ENCODE measurements at regions of chr13 and their contacts with region 1.

Region 1: DNA sequence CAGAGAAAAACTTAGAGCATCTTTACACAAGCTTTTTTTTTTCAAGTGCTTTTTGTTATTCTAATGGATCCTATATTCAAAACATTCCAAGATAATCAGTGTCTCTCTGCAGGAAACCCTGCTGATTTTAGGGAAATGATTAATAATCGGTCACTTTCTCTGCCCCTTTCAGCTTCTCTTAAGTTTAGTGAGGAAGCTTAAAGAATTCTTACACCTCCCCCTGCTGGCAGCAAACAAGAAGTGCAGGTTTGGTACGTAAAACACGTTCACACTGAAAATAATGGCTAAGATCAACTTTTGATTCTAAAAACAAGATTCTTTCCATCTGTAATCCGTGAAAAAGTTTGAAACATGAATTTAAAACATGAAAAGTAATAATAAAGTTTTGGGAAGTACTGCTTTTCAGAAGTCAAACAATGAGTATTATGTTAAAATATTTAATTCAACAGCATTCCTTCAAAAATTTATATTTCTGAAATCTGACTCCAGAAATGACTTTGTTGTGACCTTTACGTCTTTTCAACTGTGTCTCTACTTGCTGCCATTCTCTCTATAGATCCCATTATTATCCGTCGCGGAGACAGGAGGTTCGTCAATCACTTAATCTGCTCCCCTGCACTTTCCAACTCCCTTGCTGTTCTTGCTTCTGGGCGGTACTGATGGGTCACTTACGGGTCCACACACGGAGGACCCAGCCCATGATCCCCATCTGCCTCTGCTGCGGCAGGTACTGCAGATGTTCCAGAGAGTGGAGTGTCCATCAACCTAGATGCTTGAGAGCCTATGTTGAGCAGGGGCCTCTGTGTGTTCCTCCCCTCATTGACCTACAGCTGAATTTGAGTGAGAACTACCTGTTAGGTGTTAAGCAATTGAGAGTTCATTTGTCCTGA is 203.1 kb upstream of the EDNRB start:
- DNase-seq: peak; percentile 6 to 18
- ATAC-seq: peak in 1 of 2 donors; percentile 39
- H3K4me3 ChIP-seq: peak overlapping the region in 1 of 4 donors; percentile 3
- H3K27ac ChIP-seq: no peak overlapping the region
- H3K4me1 ChIP-seq: no peaks in the 10 kb centered on the region
- H3K27me3 ChIP-seq: no peaks in the 10 kb centered on the region
- CTCF ChIP-seq: peak; percentile 49 to 73 (median 59)
- POLR2A ChIP-seq: no peak

Region 2: DNA sequence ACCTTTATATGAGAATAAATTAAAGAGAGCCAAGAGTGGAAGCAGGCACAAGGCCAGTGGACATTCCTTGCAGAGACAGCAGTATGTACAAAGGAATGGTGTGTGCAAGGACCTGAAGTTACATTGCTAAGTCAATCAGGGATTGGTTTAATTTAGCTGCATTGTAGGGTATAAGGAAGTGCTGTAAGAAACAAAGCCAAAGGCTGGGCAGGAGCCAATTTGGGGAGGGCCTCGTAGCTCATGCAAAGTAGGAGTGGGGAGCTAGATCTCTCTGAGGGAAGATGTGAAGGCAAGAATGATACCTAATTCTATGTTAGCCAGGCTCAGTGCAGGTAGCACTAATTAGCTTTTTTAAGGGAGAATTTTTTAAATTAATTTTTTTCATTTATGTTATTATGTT is 347.5 kb before region 1 on chr13:
- in situ Hi-C with region 1: loop called in 2 of 4 experiments (anchors 5 kb)
- intact Hi-C with region 1: no loop called
- DNase-seq: no peak
- ATAC-seq: no peak
- H3K4me3 ChIP-seq: no peak overlapping the region
- H3K27ac ChIP-seq: no peak overlapping the region
- H3K4me1 ChIP-seq: no peaks in the 10 kb centered on the region
- H3K27me3 ChIP-seq: no peaks in the 10 kb centered on the region
- CTCF ChIP-seq: no peak
- POLR2A ChIP-seq: no peak

Region 3: GRCh38 chr13:77779552-77780272 is 342.0 kb before region 1 on chr13:
- in situ Hi-C with region 1: loop called in 2 of 4 experiments (anchors 5 kb)
- intact Hi-C with region 1: loop called (anchors 5 kb)
- DNase-seq: no peak
- ATAC-seq: peak; percentile 41 to 45
- H3K4me3 ChIP-seq: no peak overlapping the region
- H3K27ac ChIP-seq: no peak overlapping the region
- H3K4me1 ChIP-seq: no peaks in the 10 kb centered on the region
- H3K27me3 ChIP-seq: no peaks in the 10 kb centered on the region
- CTCF ChIP-seq: peak; percentile 42 to 55 (median 50)
- POLR2A ChIP-seq: no peak

Region 4: GRCh38 chr13:77800219-77800618 is 321.5 kb before region 1 on chr13:
- in situ Hi-C with region 1: loop called in 1 of 4 experiments (anchors 10 kb)
- intact Hi-C with region 1: no loop called
- DNase-seq: no peak
- ATAC-seq: no peak
- H3K4me3 ChIP-seq: no peak overlapping the region
- H3K27ac ChIP-seq: no peak overlapping the region
- H3K4me1 ChIP-seq: no peaks in the 10 kb centered on the region
- H3K27me3 ChIP-seq: no peaks in the 10 kb centered on the region
- CTCF ChIP-seq: no peak
- POLR2A ChIP-seq: no peak

Region 5: GRCh38 chr13:78700121-78700910 is 578.6 kb after region 1 on chr13:
- in situ Hi-C with region 1: no loop called
- intact Hi-C with region 1: no loop called
- DNase-seq: no peak
- ATAC-seq: no peak
- H3K4me3 ChIP-seq: no peak overlapping the region
- H3K27ac ChIP-seq: no peak overlapping the region
- H3K4me1 ChIP-seq: no peaks in the 10 kb centered on the region
- H3K27me3 ChIP-seq: no peaks in the 10 kb centered on the region
- CTCF ChIP-seq: no peak
- POLR2A ChIP-seq: no peak

Measured in gastrocnemius medialis (tissue), 4 donors.